ENCODE measurements at regions of chr12 and their contacts with region 1.

Region 1: DNA sequence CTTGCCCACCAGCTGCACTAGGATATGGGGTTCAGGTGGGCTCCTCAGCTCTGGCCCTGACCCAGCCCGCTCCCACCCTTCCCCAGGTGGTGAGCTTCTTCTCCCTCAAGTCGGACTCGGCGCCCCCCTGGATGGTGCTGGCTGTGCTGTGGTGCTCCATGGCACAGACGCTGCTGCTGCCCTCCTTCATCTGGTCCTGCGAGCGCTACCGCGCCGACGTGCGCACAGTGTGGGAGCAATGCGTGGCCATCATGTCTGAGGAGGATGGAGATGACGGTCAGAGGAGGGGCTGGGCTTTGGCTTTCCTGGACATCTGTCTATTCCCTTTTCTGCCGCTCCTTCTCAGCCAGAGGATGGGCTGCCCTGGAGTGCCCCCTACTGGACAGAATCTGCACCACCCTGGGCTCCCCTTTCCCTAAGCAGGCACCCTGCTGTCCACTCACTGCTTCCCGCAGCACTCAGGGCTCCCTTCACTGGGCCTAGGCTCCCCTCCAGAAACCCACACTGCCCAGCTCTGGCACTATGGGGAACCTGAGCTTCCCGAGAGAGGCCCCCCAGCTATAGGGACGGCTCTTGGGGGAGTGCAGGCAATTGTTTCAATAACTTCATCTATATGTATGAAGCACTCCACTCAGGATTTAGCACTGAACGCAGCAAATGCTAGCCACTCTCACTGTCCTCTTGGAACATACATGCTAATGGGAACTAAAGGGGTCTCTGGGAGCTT is 2.6 kb upstream of the P3H3 start:
- DNase-seq: peak; percentile 87
- ATAC-seq: peak; percentile 69
- H3K4me3 Mint-ChIP-seq: no peak overlapping the region
- H3K27ac Mint-ChIP-seq: no peak overlapping the region
- H3K4me1 Mint-ChIP-seq: peaks cover 38% of the 10 kb centered on the region
- H3K27me3 Mint-ChIP-seq: peaks cover 74% of the 10 kb centered on the region

Region 2: DNA sequence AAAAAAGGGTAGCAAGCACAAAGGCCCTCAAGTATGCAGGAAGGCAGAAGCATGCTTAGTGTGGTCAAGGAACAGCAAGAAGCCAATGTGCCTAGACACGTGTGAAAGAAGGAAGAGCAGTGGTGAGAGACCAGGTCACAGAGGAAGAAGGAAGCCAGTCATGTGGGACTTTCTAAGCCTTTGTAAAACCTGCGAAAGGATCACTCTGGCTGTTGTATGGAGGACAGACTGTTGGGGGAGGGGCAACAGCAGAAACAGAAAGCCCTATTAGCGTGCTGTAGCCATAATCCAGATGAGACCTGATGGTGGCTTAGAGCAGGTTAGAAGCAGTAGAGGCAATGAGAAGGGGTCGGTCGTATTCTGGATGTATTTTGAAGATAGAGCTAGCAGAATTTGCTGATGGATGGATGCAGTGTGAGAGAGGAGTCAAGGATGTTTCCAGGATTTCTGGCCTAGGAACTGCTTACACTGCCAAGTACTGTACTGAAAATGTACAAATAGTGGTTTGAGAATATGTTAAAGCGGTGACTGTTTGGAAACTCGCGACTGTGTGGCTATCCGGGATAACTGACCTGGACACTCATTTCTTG is 67.0 kb before region 1 on chr12:
- CTCF ChIA-PET with region 1: interaction called, 116 read pairs
- POLR2A ChIA-PET with region 1: interaction called, 10 read pairs
- DNase-seq: no peak
- ATAC-seq: no peak
- H3K4me3 Mint-ChIP-seq: no peak overlapping the region
- H3K27ac Mint-ChIP-seq: no peak overlapping the region
- H3K4me1 Mint-ChIP-seq: peaks cover 19% of the 10 kb centered on the region
- H3K27me3 Mint-ChIP-seq: peaks cover 22% of the 10 kb centered on the region

Region 3: DNA sequence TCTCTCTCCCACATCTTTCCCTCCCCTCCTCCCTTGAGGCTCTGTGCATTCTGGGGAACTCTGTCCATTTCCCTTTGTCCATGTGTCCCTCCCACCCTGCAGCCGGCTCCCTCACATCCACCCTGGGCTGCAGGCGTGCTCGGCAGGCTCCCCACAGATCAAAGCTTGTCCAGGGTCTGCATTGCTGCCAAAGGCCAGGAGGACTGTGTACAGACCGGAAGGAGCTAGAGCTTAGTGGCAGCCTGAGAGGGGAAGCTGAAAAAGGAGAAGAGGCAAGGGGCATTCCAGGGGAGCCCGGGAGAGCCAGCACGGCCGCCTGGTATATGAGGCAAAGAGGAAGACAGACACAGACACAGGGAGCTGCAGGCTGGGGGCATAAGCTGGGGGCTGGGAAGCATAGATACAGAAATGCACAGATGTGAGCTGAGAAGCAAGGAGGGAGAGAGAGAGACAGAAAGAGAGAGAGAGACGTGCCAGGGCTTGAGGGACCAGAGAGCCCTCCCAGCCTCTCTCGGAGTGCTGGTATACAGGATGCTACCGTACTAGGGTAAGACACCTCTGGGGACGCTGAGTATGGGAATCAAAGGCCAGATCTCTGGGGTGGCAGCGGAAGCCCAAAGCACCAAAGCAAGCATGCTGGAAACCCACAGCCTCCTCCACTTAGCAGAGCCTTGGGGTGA is 32.9 kb before region 1 on chr12:
- CTCF ChIA-PET with region 1: interaction called, 19 read pairs
- POLR2A ChIA-PET with region 1: interaction called, 3 read pairs
- DNase-seq: peak; percentile 69
- ATAC-seq: peak; percentile 90
- H3K4me3 Mint-ChIP-seq: peak overlapping the region; percentile 35
- H3K27ac Mint-ChIP-seq: peak overlapping the region; percentile 34
- H3K4me1 Mint-ChIP-seq: peaks cover 30% of the 10 kb centered on the region
- H3K27me3 Mint-ChIP-seq: peaks cover 28% of the 10 kb centered on the region

Region 4: GRCh38 chr12:6851921-6852650 is 26.5 kb after region 1 on chr12 and contains the start of gene USP5:
- CTCF ChIA-PET with region 1: interaction called, 13 read pairs
- POLR2A ChIA-PET with region 1: interaction called, 4 read pairs
- DNase-seq: peak; percentile 99
- ATAC-seq: peak; percentile 83
- H3K4me3 Mint-ChIP-seq: peak within 1 kb of the TSS; percentile 90
- H3K27ac Mint-ChIP-seq: peak within 1 kb of the TSS; percentile 98
- H3K4me1 Mint-ChIP-seq: peaks cover 44% of the 10 kb centered on the region
- H3K27me3 Mint-ChIP-seq: no peaks in the 10 kb centered on the region
- total RNA-seq, gene USP5: 105 to 108 TPM

Measured in activated CD8-positive, alpha-beta T cell treated with anti-CD3 and anti-CD28 coated beads, Interleukin-2, amount 10 ng/mL, durations not matched to agents 7 days and 5 days (primary cell).